ENCODE measurements at regions of chr10 and their contacts with region 1.

Region 1: GRCh38 chr10:100433253-100434240 is 29.3 kb upstream of the WNT8B start:
- DNase-seq: peak; percentile 74 to 94
- ATAC-seq: peak; percentile 92 to 98
- H3K4me3 ChIP-seq: no peak overlapping the region
- H3K27ac ChIP-seq: peak overlapping the region in 1 of 2 experiments; percentile 9; a peak in 4 of 6 replicates
- H3K4me1 ChIP-seq: peaks cover 32% of the 10 kb centered on the region
- CTCF ChIP-seq: peak; percentile 100
- EP300 ChIP-seq: no peak
- POLR2A ChIP-seq: no peak
- RAD21 ChIP-seq: peak; percentile 100

Region 2: DNA sequence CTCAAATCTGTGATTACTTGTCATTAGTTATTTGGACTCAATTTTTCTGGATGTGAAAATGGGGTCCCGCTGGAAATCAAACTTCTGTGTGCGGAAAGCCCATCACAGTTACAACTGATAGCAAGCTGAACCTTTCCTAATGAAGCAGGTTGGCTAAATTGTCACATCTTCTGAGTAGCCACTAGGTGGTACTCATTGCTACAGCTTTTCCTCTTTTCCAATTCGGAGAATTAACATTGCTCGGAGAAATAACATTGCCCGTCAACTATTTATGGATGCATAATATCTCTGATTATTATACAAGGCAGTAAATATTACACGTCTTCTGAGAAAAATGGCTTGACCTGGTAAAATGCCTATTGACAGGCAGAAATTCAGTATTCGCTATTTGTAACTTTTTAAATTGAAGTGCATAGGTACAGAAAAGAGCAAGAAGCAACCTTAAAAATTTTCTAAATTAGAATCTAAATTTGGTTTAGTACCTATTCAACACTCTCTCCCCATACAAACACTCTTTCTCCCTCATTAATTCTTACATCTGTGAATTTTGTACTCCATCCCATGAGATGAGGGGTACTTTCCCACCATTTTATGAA is 129.7 kb before region 1 on chr10:
- CTCF ChIA-PET with region 1: interaction called, 26 read pairs
- POLR2A ChIA-PET with region 1: no interaction called
- DNase-seq: peak; percentile 55 to 69
- ATAC-seq: peak; percentile 63 to 85; a peak in 3 of 6 replicates
- H3K4me3 ChIP-seq: no peak overlapping the region
- H3K27ac ChIP-seq: no peak overlapping the region
- H3K4me1 ChIP-seq: peaks cover 32% of the 10 kb centered on the region
- CTCF ChIP-seq: peak; percentile 80
- EP300 ChIP-seq: no peak
- POLR2A ChIP-seq: no peak
- RAD21 ChIP-seq: peak; percentile 79

Region 3: DNA sequence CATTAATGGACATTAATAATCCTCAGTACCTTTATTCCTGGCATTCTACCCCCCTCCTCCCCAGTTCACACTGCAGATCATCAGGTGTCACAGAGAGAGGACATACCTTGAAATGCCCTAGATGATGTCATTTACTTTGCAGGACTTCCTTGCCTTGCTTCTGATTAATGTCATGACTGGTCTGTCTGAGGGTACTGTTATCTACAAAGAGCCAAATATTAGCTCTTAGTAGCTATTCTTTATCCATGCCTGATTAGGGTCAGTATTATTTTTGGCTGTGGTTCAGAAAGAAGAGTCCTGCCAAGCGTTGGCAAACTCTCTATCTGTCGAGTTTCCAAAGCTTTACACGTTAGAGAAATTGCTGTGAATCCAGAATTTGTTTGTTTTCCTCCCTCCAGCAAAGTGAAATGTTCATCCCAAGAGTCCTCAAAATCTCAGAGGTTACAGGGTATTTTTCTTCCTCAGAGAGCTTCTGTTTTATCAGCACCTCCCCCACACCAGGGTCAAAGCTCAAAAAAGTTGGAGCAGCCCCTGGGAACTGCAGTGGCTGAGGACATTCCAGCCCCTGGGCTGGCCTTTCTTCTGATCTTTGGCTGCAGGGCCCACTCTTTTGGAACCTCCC is 73.9 kb before region 1 on chr10:
- CTCF ChIA-PET with region 1: interaction called, 13 read pairs
- POLR2A ChIA-PET with region 1: no interaction called
- DNase-seq: no peak
- ATAC-seq: peak in 1 of 2 experiments; percentile 6; a peak in 2 of 6 replicates
- H3K4me3 ChIP-seq: no peak overlapping the region
- H3K27ac ChIP-seq: peak overlapping the region; percentile 13 to 58; a peak in 4 of 6 replicates
- H3K4me1 ChIP-seq: peaks cover 99% of the 10 kb centered on the region
- CTCF ChIP-seq: no peak
- EP300 ChIP-seq: no peak
- POLR2A ChIP-seq: no peak
- RAD21 ChIP-seq: no peak

Region 4: GRCh38 chr10:100413173-100413572 is 20.4 kb before region 1 on chr10:
- CTCF ChIA-PET with region 1: interaction called, 16 read pairs
- POLR2A ChIA-PET with region 1: no interaction called
- DNase-seq: no peak
- ATAC-seq: no peak; a peak in 1 of 6 replicates
- H3K4me3 ChIP-seq: no peak overlapping the region
- H3K27ac ChIP-seq: no peak overlapping the region
- H3K4me1 ChIP-seq: no peaks in the 10 kb centered on the region
- CTCF ChIP-seq: no peak
- EP300 ChIP-seq: no peak
- POLR2A ChIP-seq: no peak
- RAD21 ChIP-seq: no peak

Region 5: DNA sequence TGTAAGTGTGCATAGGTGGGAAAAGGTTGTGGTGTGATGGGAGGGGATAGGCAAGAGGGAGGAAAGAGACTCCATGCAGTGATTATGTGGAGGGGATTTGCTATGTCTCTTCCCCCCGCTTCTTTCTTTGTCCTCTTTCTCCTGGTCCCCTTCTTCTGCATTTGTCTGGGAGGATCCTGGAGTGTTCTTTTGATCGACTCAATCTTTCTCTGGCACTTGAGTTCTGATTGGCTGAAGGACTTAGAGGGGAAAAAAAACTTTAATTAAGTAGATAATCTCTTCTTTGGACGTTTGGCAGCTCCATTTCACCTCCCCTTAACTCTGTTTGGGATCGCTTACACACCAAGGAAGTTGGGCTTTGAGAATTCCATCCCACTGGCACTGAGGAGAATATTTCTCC is 29.2 kb after region 1 on chr10 and contains the start of gene WNT8B:
- CTCF ChIA-PET with region 1: interaction called, 26 read pairs
- POLR2A ChIA-PET with region 1: no interaction called
- DNase-seq: no peak
- ATAC-seq: no peak
- H3K4me3 ChIP-seq: no peak within 1 kb of the TSS
- H3K27ac ChIP-seq: no peak within 1 kb of the TSS
- H3K4me1 ChIP-seq: no peaks in the 10 kb centered on the region
- CTCF ChIP-seq: no peak
- EP300 ChIP-seq: no peak
- POLR2A ChIP-seq: no peak
- RAD21 ChIP-seq: no peak
- polyA plus RNA-seq, gene WNT8B: 0.05 and 0.08 TPM in 2 replicates

Region 6: DNA sequence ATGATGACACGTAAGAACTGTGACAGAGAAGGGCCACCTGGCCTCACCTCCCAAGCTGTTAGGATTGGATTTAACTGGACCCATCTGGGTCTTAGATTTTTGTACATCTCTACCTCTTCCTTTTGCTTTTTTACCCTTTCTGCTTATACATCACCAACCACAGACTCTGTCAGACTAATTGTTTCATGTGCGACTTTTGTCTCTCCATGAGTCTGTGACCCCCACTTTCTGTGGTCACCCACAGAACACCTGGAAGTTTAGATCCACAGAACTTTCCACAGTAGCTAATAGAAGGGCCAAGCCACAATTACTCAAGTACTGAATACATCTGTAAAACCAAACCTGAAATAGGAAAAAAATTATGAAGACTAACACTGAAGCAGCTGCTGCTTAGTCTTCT is 63.0 kb after region 1 on chr10:
- CTCF ChIA-PET with region 1: interaction called, 267 read pairs
- POLR2A ChIA-PET with region 1: no interaction called
- DNase-seq: no peak
- ATAC-seq: no peak
- H3K4me3 ChIP-seq: no peak overlapping the region
- H3K27ac ChIP-seq: no peak overlapping the region
- H3K4me1 ChIP-seq: no peaks in the 10 kb centered on the region
- CTCF ChIP-seq: no peak
- EP300 ChIP-seq: no peak
- POLR2A ChIP-seq: no peak
- RAD21 ChIP-seq: no peak

Region 7: GRCh38 chr10:100878291-100878910 is 444.9 kb after region 1 on chr10:
- CTCF ChIA-PET with region 1: interaction called, 21 read pairs
- POLR2A ChIA-PET with region 1: no interaction called
- DNase-seq: peak; percentile 80 to 92
- ATAC-seq: peak; percentile 90 to 97
- H3K4me3 ChIP-seq: no peak overlapping the region
- H3K27ac ChIP-seq: peak overlapping the region in 1 of 2 experiments; percentile 64; a peak in 2 of 6 replicates
- H3K4me1 ChIP-seq: peaks cover 15% of the 10 kb centered on the region; the same call in 2 of the 3 replicates
- CTCF ChIP-seq: peak; percentile 91
- EP300 ChIP-seq: no peak
- POLR2A ChIP-seq: no peak
- RAD21 ChIP-seq: peak; percentile 91 to 94